ENCODE measurements at regions of chr2 and their contacts with region 1.

Region 1: GRCh38 chr2:158686210-158686691 is 108.9 kb upstream of the DAPL1 start:
- DNase-seq: peak; percentile 64 to 93 (median 83)

Region 2: DNA sequence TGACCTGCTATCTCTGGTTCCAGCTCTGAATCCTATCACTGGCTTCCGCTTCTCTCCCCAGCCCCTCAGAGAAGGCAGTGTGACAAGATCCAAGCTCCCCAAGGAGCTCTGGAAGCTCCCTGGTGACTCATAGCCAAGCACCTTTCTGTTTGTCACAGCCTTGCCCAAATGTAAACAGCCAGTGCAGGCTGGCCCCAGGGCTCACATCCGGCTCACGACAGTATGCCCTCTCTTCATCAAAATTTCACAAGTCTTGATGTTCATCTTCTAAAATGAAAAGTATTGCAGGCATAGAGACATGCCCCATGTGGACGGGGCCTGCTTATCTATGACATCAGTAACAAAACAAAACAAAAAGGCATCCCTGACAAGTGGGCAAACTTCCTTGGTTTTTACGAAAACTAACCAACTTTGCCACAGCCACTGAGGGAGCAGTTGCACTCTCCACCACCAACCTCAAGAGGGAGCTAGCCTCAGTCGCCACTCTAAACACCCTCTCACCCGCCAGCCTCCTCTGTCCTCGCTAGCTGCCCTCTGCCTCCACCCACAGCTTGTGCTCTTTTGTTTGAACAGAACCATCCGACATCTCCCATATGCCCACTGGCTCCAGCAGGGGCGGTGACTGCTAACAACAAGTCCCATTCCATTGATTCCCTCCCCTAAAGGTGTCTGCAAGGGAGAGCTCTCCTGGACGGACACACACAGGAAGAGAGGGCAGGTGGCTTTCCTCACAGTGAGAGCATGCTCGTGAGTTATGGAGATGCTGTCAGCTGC is 37.9 kb after region 1 on chr2:
- intact Hi-C with region 1: loop called (anchors 5 kb)
- DNase-seq: peak in 33 of 42 donors; percentile 11 to 79 (median 59)

Region 3: GRCh38 chr2:158745044-158745865 is 59.0 kb after region 1 on chr2:
- intact Hi-C with region 1: loop called (anchors 10 kb)
- DNase-seq: peak; percentile 61 to 88 (median 78)